Natural killer cell (primary cell): ENCODE measurements at regions of chr9 and their contacts with region 1.

Region 1: GRCh38 chr9:32968101-32969011 is 33.1 kb downstream of the APTX start:
- DNase-seq: peak; percentile 45 to 73
- ATAC-seq: peak in 2 of 3 donors; percentile 42 to 56
- H3K4me3 ChIP-seq: no peak overlapping the region
- H3K4me3 Mint-ChIP-seq: no peak overlapping the region
- H3K27ac ChIP-seq: no peak overlapping the region
- H3K27ac Mint-ChIP-seq: no peak overlapping the region
- H3K4me1 ChIP-seq: no peaks in the 10 kb centered on the region
- H3K4me1 Mint-ChIP-seq: peaks cover 6 to 7% of the 10 kb centered on the region in 2 donors
- H3K27me3 ChIP-seq: no peaks in the 10 kb centered on the region
- H3K27me3 Mint-ChIP-seq: no peaks in the 10 kb centered on the region
- CTCF ChIP-seq: peak; percentile 95

Region 2: DNA sequence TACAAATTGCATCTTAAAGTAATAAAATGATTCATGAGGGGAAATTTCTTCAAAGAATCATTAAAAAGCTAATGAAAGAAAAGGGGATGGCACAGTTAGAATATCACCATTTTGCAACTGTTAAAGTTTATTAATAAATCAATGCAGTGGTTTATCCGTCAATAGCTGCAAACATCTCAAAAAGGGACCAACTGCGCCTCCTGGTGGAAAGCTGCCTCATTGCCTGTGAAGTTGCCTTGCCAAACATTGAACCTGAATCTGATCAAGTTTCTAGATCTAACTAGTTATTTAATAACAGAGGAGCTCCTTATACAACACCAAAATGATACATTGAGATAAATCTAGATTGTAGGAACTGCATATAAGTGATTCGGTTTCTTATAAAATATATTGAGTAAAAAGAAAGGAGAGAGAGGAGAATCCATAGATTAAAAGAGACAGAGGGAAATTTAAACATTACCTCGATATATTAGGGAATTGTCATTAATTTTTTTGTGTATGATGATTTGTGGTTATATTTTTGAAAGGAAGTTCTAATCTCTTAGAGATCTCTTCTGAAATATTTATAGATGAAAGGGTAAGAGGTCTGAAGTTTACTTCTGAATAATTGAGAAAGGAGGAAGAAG is 388.5 kb before region 1 on chr9:
- intact Hi-C with region 1: loop called (anchors 2 kb)
- DNase-seq: peak; percentile 71 to 89
- ATAC-seq: peak; percentile 63 to 78 (median 72)
- H3K4me3 ChIP-seq: no peak overlapping the region
- H3K4me3 Mint-ChIP-seq: no peak overlapping the region
- H3K27ac ChIP-seq: no peak overlapping the region
- H3K27ac Mint-ChIP-seq: no peak overlapping the region
- H3K4me1 ChIP-seq: no peaks in the 10 kb centered on the region
- H3K4me1 Mint-ChIP-seq: no peaks in the 10 kb centered on the region
- H3K27me3 ChIP-seq: peaks cover 6% of the 10 kb centered on the region
- H3K27me3 Mint-ChIP-seq: peaks cover 28 to 55% of the 10 kb centered on the region in 2 donors
- CTCF ChIP-seq: peak; percentile 95

Region 3: DNA sequence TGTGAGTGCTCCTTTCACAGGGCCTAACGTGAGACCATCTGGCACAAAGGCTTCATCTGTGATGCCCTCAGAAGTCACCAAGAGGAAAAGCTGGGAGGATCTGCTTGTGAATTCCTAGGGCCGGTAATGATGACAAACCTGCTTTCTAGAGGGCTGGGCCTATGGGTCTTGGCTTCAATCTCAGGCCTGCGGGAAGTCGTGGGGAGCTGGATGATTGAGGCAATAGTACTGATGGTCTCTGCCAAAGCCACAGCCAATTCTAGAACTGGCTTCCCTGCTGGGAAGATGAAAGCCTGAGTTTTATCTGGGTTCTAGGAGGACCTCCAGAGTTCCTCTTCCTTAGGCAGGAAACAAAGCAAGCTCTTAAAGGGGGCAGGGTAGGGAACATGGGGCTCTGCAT is 82.3 kb before region 1 on chr9:
- intact Hi-C with region 1: no loop called
- DNase-seq: no peak
- ATAC-seq: no peak
- H3K4me3 ChIP-seq: no peak overlapping the region
- H3K4me3 Mint-ChIP-seq: no peak overlapping the region
- H3K27ac ChIP-seq: no peak overlapping the region
- H3K27ac Mint-ChIP-seq: no peak overlapping the region
- H3K4me1 ChIP-seq: no peaks in the 10 kb centered on the region
- H3K4me1 Mint-ChIP-seq: no peaks in the 10 kb centered on the region
- H3K27me3 ChIP-seq: peaks cover 2% of the 10 kb centered on the region
- H3K27me3 Mint-ChIP-seq: peaks cover 13 to 14% of the 10 kb centered on the region in 2 donors
- CTCF ChIP-seq: no peak